ENCODE measurements at regions of chr14 and their contacts with region 1.

Region 1: GRCh38 chr14:76386915-76387782 is 11.2 kb downstream of the ESRRB start:
- DNase-seq: peak; percentile 63
- H3K4me3 ChIP-seq: no peak overlapping the region
- H3K27ac ChIP-seq: no peak overlapping the region
- H3K4me1 ChIP-seq: no peaks in the 10 kb centered on the region
- H3K27me3 ChIP-seq: peaks cover 21 to 39% of the 10 kb centered on the region in 2 experiments
- CTCF ChIP-seq: peak; percentile 98
- POLR2A ChIP-seq: no peak

Region 2: DNA sequence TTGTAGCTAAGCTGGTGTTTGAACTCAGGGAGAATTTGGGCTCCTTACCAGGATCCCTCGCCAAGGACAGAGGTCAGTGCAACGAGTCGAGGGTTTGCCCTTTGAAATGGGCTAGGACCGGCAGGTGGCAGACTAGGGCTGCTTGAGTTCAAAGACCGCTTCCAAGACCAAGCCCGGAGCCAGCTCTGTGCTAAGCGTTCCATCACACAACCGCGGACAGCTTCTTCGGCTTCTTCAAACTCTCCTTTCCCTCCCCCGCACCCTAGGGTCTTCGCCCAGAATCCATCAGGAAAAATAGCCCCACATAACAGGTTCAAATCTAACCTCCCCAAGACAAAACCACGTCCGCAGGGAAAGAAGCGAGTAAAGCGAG is 809.4 kb before region 1 on chr14:
- CTCF ChIA-PET with region 1: interaction called, 3 read pairs
- POLR2A ChIA-PET with region 1: no interaction called
- dilution Hi-C with region 1: no loop called
- intact Hi-C with region 1: loop called (anchors 2 kb)
- DNase-seq: peak; percentile 82
- H3K4me3 ChIP-seq: peak overlapping the region; percentile 50 to 83 (median 64)
- H3K27ac ChIP-seq: no peak overlapping the region
- H3K4me1 ChIP-seq: peaks cover 18% of the 10 kb centered on the region
- H3K27me3 ChIP-seq: peaks cover 0 to 4% of the 10 kb centered on the region in 2 experiments
- CTCF ChIP-seq: peak; percentile 70 to 83
- POLR2A ChIP-seq: no peak

Region 3: GRCh38 chr14:76133083-76133498 is 254.1 kb before region 1 on chr14:
- CTCF ChIA-PET with region 1: interaction called, 17 read pairs
- POLR2A ChIA-PET with region 1: no interaction called
- dilution Hi-C with region 1: no loop called
- intact Hi-C with region 1: no loop called
- DNase-seq: peak; percentile 36
- H3K4me3 ChIP-seq: no peak overlapping the region
- H3K27ac ChIP-seq: no peak overlapping the region
- H3K4me1 ChIP-seq: no peaks in the 10 kb centered on the region
- H3K27me3 ChIP-seq: peaks cover 30 to 40% of the 10 kb centered on the region in 2 experiments
- CTCF ChIP-seq: no peak
- POLR2A ChIP-seq: no peak

Region 4: DNA sequence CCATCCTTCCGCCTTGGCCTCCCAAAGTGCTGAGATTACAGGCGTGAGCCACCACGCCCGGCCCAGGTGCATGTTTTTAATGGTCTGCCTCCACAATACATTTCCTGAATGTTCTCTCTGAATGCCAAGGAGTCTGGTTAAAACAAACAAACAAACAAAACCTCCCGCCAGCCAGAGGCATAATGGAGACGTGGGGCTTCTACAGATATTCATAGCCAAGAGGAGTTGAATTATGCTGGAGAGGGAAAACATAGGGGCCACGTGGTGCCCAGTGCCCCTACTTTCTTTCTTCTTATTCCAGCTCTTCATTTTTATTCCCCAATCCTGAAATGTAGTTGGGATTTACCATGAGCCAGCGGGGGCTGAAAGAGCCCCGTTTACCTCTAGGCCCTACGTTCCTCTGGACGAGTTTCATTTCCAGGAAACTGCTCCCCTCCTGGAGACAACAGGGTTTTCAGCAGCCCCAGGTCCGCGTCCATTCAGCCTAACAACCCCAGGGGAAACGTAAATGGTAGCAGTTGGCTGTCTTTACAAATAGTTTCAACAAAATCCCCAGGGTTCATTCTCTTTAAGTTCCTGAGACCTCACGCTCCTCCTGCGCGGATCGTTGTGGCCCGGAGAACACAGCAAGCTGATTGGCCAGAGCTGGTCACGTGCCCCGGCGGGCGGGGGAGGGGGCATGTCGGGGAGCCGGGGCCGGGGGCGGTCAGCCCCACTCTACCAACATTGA is 119.7 kb before region 1 on chr14:
- CTCF ChIA-PET with region 1: no interaction called
- POLR2A ChIA-PET with region 1: no interaction called
- dilution Hi-C with region 1: no loop called
- intact Hi-C with region 1: no loop called
- DNase-seq: peak; percentile 55
- H3K4me3 ChIP-seq: peak overlapping the region; percentile 2 to 46 (median 34)
- H3K27ac ChIP-seq: no peak overlapping the region
- H3K4me1 ChIP-seq: no peaks in the 10 kb centered on the region
- H3K27me3 ChIP-seq: peaks cover 2 to 6% of the 10 kb centered on the region in 2 experiments
- CTCF ChIP-seq: no peak
- POLR2A ChIP-seq: no peak

Region 5: GRCh38 chr14:76376878-76377734 is 10.0 kb before region 1 on chr14:
- CTCF ChIA-PET with region 1: interaction called, 10 read pairs
- POLR2A ChIA-PET with region 1: no interaction called
- dilution Hi-C with region 1: no loop called
- intact Hi-C with region 1: no loop called
- DNase-seq: no peak
- H3K4me3 ChIP-seq: no peak overlapping the region
- H3K27ac ChIP-seq: no peak overlapping the region
- H3K4me1 ChIP-seq: peaks cover 11% of the 10 kb centered on the region
- H3K27me3 ChIP-seq: peaks cover 60 to 73% of the 10 kb centered on the region in 2 experiments
- CTCF ChIP-seq: no peak
- POLR2A ChIP-seq: no peak

Region 6: DNA sequence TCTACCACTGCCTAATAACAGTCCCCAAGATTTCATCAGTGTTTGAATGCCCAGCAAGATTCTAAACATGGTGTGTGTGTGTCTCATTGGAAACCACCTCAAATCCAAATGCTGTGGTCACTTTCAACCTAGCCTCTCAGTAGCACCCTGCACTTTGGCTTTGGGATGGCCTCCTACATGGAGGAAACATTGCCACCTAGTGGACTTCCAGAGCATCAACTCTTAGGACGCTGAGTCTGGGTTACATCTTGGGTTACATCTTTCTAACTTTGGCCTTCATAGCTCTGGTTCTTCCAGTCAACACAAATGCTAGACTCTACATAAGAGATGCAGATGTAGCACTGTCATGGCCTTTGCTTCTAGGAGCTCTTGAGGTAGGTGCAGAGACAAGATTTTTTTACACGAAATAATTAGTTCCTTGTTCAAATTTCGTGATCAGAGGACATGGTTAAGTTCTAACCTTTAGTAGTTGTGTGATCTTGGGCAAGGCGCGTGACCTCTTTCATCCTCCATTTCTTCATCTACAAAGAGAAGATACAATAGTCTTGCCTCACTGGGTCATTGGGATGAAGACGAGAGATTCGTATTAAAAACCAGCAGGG is 260.6 kb after region 1 on chr14:
- CTCF ChIA-PET with region 1: interaction called, 3 read pairs
- POLR2A ChIA-PET with region 1: no interaction called
- dilution Hi-C with region 1: no loop called
- intact Hi-C with region 1: loop called (anchors 2 kb)
- DNase-seq: peak; percentile 47
- H3K4me3 ChIP-seq: no peak overlapping the region
- H3K27ac ChIP-seq: no peak overlapping the region
- H3K4me1 ChIP-seq: no peaks in the 10 kb centered on the region
- H3K27me3 ChIP-seq: peaks cover 0 to 2% of the 10 kb centered on the region in 2 experiments
- CTCF ChIP-seq: peak; percentile 81 to 87
- POLR2A ChIP-seq: no peak